ENCODE measurements at regions of chrX and their contacts with region 1.

Region 1: GRCh38 chrX:2627272-2627867 is 63.7 kb upstream of the CD99 start:
- DNase-seq: peak; percentile 69
- ATAC-seq: peak; percentile 28
- H3K4me3 ChIP-seq: no peak overlapping the region
- H3K4me3 Mint-ChIP-seq: peak overlapping the region; percentile 17
- H3K27ac ChIP-seq: no peak overlapping the region
- H3K27ac Mint-ChIP-seq: peak overlapping the region; percentile 54
- H3K4me1 ChIP-seq: peaks cover 17 to 27% of the 10 kb centered on the region in 2 donors
- H3K4me1 Mint-ChIP-seq: peaks cover 43% of the 10 kb centered on the region
- H3K27me3 ChIP-seq: no peaks in the 10 kb centered on the region
- H3K27me3 Mint-ChIP-seq: no peaks in the 10 kb centered on the region
- CTCF ChIP-seq: peak; percentile 66

Region 2: GRCh38 chrX:1591102-1591900 is 1036.1 kb before region 1 on chrX and contains the start of gene AKAP17A:
- CTCF ChIA-PET with region 1: no interaction called
- POLR2A ChIA-PET with region 1: no interaction called
- intact Hi-C with region 1: loop called (anchors 2 kb)
- DNase-seq: peak; percentile 97
- ATAC-seq: peak; percentile 88
- H3K4me3 ChIP-seq: peak within 1 kb of the TSS; percentile 55 to 90 (median 78)
- H3K4me3 Mint-ChIP-seq: peak within 1 kb of the TSS; percentile 95
- H3K27ac ChIP-seq: peak within 1 kb of the TSS; percentile 61 to 81
- H3K27ac Mint-ChIP-seq: peak within 1 kb of the TSS; percentile 95
- H3K4me1 ChIP-seq: peaks cover 20 to 47% of the 10 kb centered on the region in 2 donors
- H3K4me1 Mint-ChIP-seq: peaks cover 40% of the 10 kb centered on the region
- H3K27me3 ChIP-seq: no peaks in the 10 kb centered on the region
- H3K27me3 Mint-ChIP-seq: no peaks in the 10 kb centered on the region
- CTCF ChIP-seq: peak; percentile 26
- total RNA-seq, gene AKAP17A: 126 and 129 TPM in 2 replicates

Region 3: GRCh38 chrX:1657367-1658070 is 969.9 kb before region 1 on chrX:
- CTCF ChIA-PET with region 1: no interaction called
- POLR2A ChIA-PET with region 1: no interaction called
- intact Hi-C with region 1: loop called (anchors 1 kb)
- DNase-seq: peak; percentile 76
- ATAC-seq: peak; percentile 19
- H3K4me3 ChIP-seq: peak overlapping the region in 4 of 5 experiments; percentile 21 to 52 (median 33)
- H3K4me3 Mint-ChIP-seq: peak overlapping the region; percentile 85
- H3K27ac ChIP-seq: peak overlapping the region; percentile 75
- H3K27ac Mint-ChIP-seq: peak overlapping the region; percentile 84
- H3K4me1 ChIP-seq: peaks cover 11 to 32% of the 10 kb centered on the region in 2 donors
- H3K4me1 Mint-ChIP-seq: peaks cover 36% of the 10 kb centered on the region
- H3K27me3 ChIP-seq: no peaks in the 10 kb centered on the region
- H3K27me3 Mint-ChIP-seq: no peaks in the 10 kb centered on the region
- CTCF ChIP-seq: no peak

Region 4: GRCh38 chrX:2538031-2538757 is 89.2 kb before region 1 on chrX:
- CTCF ChIA-PET with region 1: no interaction called
- POLR2A ChIA-PET with region 1: no interaction called
- intact Hi-C with region 1: no loop called
- DNase-seq: no peak
- ATAC-seq: no peak
- H3K4me3 ChIP-seq: no peak overlapping the region
- H3K4me3 Mint-ChIP-seq: no peak overlapping the region
- H3K27ac ChIP-seq: no peak overlapping the region
- H3K27ac Mint-ChIP-seq: no peak overlapping the region
- H3K4me1 ChIP-seq: no peaks in the 10 kb centered on the region
- H3K4me1 Mint-ChIP-seq: no peaks in the 10 kb centered on the region
- H3K27me3 ChIP-seq: no peaks in the 10 kb centered on the region
- H3K27me3 Mint-ChIP-seq: peaks cover 16% of the 10 kb centered on the region
- CTCF ChIP-seq: no peak

Region 5: GRCh38 chrX:2677764-2678163 is 50.4 kb after region 1 on chrX:
- CTCF ChIA-PET with region 1: no interaction called
- POLR2A ChIA-PET with region 1: no interaction called
- intact Hi-C with region 1: no loop called
- DNase-seq: no peak
- ATAC-seq: no peak
- H3K4me3 ChIP-seq: no peak overlapping the region
- H3K4me3 Mint-ChIP-seq: no peak overlapping the region
- H3K27ac ChIP-seq: no peak overlapping the region
- H3K27ac Mint-ChIP-seq: no peak overlapping the region
- H3K4me1 ChIP-seq: no peaks in the 10 kb centered on the region
- H3K4me1 Mint-ChIP-seq: no peaks in the 10 kb centered on the region
- H3K27me3 ChIP-seq: no peaks in the 10 kb centered on the region
- H3K27me3 Mint-ChIP-seq: peaks cover 5% of the 10 kb centered on the region
- CTCF ChIP-seq: no peak

Region 6: GRCh38 chrX:2690856-2691542 is 63.6 kb after region 1 on chrX and contains the start of gene CD99:
- CTCF ChIA-PET with region 1: no interaction called
- POLR2A ChIA-PET with region 1: no interaction called
- intact Hi-C with region 1: loop called (anchors 1 kb)
- DNase-seq: peak; percentile 94
- ATAC-seq: peak; percentile 92
- H3K4me3 ChIP-seq: peak within 1 kb of the TSS; percentile 67 to 99 (median 84)
- H3K4me3 Mint-ChIP-seq: peak within 1 kb of the TSS; percentile 87
- H3K27ac ChIP-seq: peak within 1 kb of the TSS; percentile 26 to 50
- H3K27ac Mint-ChIP-seq: peak within 1 kb of the TSS; percentile 82
- H3K4me1 ChIP-seq: peaks cover 27 to 46% of the 10 kb centered on the region in 2 donors
- H3K4me1 Mint-ChIP-seq: peaks cover 39% of the 10 kb centered on the region
- H3K27me3 ChIP-seq: no peaks in the 10 kb centered on the region
- H3K27me3 Mint-ChIP-seq: no peaks in the 10 kb centered on the region
- CTCF ChIP-seq: no peak
- total RNA-seq, gene CD99: 133 TPM in 2 replicates

Region 7: DNA sequence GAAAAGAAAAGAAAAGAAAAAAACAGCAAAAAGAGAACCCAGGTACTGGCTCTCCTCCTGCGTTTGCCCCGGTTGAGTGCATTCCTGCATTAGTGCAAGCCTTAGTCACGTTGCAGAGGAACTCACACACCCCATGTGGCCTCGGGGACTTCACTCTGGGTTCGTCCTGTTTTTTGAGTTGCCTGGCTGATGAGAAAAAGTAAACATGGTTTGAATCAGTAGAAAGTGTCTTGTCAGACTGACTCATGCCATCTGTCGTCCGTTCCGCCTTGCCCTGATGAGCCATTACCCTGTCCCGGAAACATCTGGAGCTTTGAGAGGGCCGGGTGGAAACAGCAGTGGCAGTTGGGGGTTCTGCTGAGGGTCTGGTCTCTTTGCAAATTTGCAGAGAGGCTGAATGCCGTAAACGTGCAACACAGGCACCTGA is 80.0 kb after region 1 on chrX:
- CTCF ChIA-PET with region 1: no interaction called
- POLR2A ChIA-PET with region 1: no interaction called
- intact Hi-C with region 1: loop called (anchors 1 kb)
- DNase-seq: peak; percentile 92
- ATAC-seq: peak; percentile 85
- H3K4me3 ChIP-seq: peak overlapping the region in 1 of 5 experiments; percentile 47
- H3K4me3 Mint-ChIP-seq: peak overlapping the region; percentile 73
- H3K27ac ChIP-seq: peak overlapping the region; percentile 72
- H3K27ac Mint-ChIP-seq: peak overlapping the region; percentile 89
- H3K4me1 ChIP-seq: peaks cover 49 to 68% of the 10 kb centered on the region in 2 donors
- H3K4me1 Mint-ChIP-seq: peaks cover 76% of the 10 kb centered on the region
- H3K27me3 ChIP-seq: no peaks in the 10 kb centered on the region
- H3K27me3 Mint-ChIP-seq: no peaks in the 10 kb centered on the region
- CTCF ChIP-seq: no peak

Region 8: DNA sequence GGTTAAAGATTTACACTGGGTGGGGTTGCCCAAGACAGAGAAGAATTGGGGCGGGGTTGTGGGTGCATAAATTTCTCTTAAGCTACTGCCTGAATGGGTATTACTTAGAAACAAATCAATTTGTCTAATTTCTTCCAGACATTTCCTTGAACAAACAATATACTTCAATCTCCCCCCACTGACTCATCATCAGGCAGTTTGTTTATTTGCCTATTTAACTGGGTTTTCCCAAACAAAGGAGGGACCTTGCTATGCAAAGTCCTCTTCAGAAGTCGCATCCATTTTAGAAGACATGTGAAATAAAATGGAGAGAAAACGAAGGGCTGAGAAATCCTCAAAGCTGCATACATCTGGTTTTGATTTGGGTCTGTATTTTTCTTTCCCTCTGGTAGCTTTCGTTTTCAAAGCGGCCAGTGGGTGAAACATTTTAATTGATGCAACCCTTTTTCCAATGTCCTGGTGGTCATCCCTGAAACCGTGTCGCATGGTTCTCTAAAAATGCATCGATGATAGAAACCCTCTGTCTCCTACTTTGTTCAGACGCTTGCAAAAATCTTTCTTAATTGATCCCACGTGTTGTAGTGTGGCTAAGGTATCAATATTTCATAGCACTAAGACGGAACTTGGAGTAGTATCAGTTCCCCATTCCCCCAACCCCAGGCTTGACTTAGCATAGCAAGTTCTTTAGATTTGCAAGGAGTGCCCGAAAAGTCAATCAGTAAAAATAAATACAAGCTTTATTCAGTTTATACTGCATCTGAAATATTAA is 834.2 kb after region 1 on chrX:
- CTCF ChIA-PET with region 1: no interaction called
- POLR2A ChIA-PET with region 1: no interaction called
- intact Hi-C with region 1: no loop called
- DNase-seq: no peak
- ATAC-seq: no peak
- H3K4me3 ChIP-seq: no peak overlapping the region
- H3K4me3 Mint-ChIP-seq: no peak overlapping the region
- H3K27ac ChIP-seq: no peak overlapping the region
- H3K27ac Mint-ChIP-seq: no peak overlapping the region
- H3K4me1 ChIP-seq: no peaks in the 10 kb centered on the region
- H3K4me1 Mint-ChIP-seq: no peaks in the 10 kb centered on the region
- H3K27me3 ChIP-seq: no peaks in the 10 kb centered on the region
- H3K27me3 Mint-ChIP-seq: peaks cover 4% of the 10 kb centered on the region
- CTCF ChIP-seq: no peak

Measured in B cell (primary cell).